ENCODE measurements at regions of chr22 and their contacts with region 1.

Region 1: DNA sequence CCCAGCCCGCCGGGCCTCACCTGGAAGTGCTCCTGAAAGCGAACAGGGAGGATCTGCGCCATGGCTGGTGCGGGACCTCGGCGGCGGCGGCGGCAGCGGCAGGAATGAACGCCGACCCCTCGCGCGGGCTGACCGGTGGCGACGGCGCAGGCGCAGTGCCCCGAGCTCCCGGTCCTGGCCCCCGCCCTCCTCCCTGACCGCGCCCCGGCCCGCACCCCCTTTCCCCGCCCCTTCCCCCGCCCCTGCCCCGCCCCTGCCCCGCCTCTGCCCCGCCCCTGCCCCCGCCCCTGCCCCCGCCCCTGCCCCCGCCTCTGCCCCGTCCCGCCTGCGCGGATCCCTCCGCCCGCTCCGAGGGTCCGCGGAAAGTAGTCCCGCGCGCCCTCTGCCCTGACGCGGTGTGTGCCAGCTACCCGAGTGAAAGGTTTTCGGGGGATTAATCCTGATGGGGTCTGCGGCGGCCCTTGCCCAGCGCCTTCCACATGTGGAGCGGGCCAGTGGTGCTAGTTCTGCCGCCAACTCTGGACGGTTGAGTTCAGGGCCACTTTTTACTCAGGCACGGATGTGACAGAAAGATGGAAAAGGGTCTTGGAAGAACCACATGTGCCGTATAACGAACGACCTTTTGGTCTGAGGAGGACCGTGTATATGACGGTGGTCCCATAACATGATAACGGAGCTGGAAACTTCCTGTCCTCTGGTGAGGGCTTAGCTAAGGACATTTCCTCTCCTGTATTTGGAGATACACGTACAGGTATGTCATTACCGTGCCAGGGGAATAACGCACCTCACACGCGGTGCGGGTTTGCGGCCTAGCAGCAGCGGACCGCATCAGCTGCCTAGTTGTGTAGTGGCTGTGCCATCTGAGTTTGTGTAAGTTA is at the start of gene CLTCL1:
- DNase-seq: peak; percentile 94 to 100 (median 100)
- ATAC-seq: peak; percentile 84
- H3K4me3 ChIP-seq: peak within 1 kb of the TSS; percentile 61
- H3K27ac ChIP-seq: peak within 1 kb of the TSS; percentile 67
- H3K4me1 ChIP-seq: peaks cover 25% of the 10 kb centered on the region in 2 experiments; a peak in 4 of 5 replicates
- H3K27me3 ChIP-seq: peaks cover 34 to 35% of the 10 kb centered on the region in 2 experiments; a peak in 4 of 5 replicates
- CTCF ChIP-seq: peak in 1 of 3 experiments; percentile 10; a peak in 2 of 6 replicates
- EP300 ChIP-seq: peak; percentile 14; the same call in 1 of the 2 replicates
- POLR2A ChIP-seq: peak; percentile 89
- RAD21 ChIP-seq: peak in 1 of 2 experiments; percentile 44; a peak in 2 of 4 replicates
- polyA plus RNA-seq, gene CLTCL1: 1.1 to 2.1 TPM

Region 2: GRCh38 chr22:19035474-19036228 is 256.2 kb before region 1 on chr22:
- CTCF ChIA-PET with region 1: no interaction called
- POLR2A ChIA-PET with region 1: no interaction called
- in situ Hi-C with region 1: no loop called
- intact Hi-C with region 1: loop called (anchors 10 kb)
- DNase-seq: peak; percentile 64 to 76 (median 69)
- ATAC-seq: peak; percentile 62
- H3K4me3 ChIP-seq: no peak overlapping the region
- H3K27ac ChIP-seq: no peak overlapping the region
- H3K4me1 ChIP-seq: peaks cover 0 to 27% of the 10 kb centered on the region in 2 experiments; a peak in 1 of 5 replicates
- H3K27me3 ChIP-seq: peaks cover 13 to 26% of the 10 kb centered on the region in 2 experiments; a peak in 4 of 5 replicates
- CTCF ChIP-seq: peak; percentile 39 to 63 (median 55); a peak in 5 of 6 replicates
- EP300 ChIP-seq: no peak
- POLR2A ChIP-seq: peak; percentile 72
- RAD21 ChIP-seq: peak in 1 of 2 experiments; percentile 57; a peak in 2 of 4 replicates

Region 3: GRCh38 chr22:19109198-19110067 is 182.4 kb before region 1 on chr22:
- CTCF ChIA-PET with region 1: no interaction called
- POLR2A ChIA-PET with region 1: no interaction called
- in situ Hi-C with region 1: no loop called
- intact Hi-C with region 1: loop called (anchors 10 kb)
- DNase-seq: peak in 3 of 4 experiments; percentile 57 to 95 (median 95)
- ATAC-seq: peak; percentile 89
- H3K4me3 ChIP-seq: peak overlapping the region; percentile 14
- H3K27ac ChIP-seq: peak overlapping the region; percentile 47
- H3K4me1 ChIP-seq: peaks cover 38 to 44% of the 10 kb centered on the region in 2 experiments
- H3K27me3 ChIP-seq: no peaks in the 10 kb centered on the region
- CTCF ChIP-seq: no peak
- EP300 ChIP-seq: peak; percentile 96
- POLR2A ChIP-seq: no peak
- RAD21 ChIP-seq: peak; percentile 16 to 23; a peak in 2 of 4 replicates

Region 4: GRCh38 chr22:19214078-19214473 is 77.7 kb before region 1 on chr22:
- CTCF ChIA-PET with region 1: no interaction called
- POLR2A ChIA-PET with region 1: no interaction called
- in situ Hi-C with region 1: no loop called
- intact Hi-C with region 1: loop called (anchors 1 kb)
- DNase-seq: peak in 1 of 4 experiments; percentile 38
- ATAC-seq: no peak
- H3K4me3 ChIP-seq: no peak overlapping the region
- H3K27ac ChIP-seq: no peak overlapping the region
- H3K4me1 ChIP-seq: peaks cover 9 to 13% of the 10 kb centered on the region in 2 experiments
- H3K27me3 ChIP-seq: peaks cover 30 to 37% of the 10 kb centered on the region in 2 experiments
- CTCF ChIP-seq: no peak
- EP300 ChIP-seq: no peak
- POLR2A ChIP-seq: no peak
- RAD21 ChIP-seq: 0 out of 4 replicates have a peak, but pooled peaks of 1 of the 2 experiments have one; percentile 9

Region 5: DNA sequence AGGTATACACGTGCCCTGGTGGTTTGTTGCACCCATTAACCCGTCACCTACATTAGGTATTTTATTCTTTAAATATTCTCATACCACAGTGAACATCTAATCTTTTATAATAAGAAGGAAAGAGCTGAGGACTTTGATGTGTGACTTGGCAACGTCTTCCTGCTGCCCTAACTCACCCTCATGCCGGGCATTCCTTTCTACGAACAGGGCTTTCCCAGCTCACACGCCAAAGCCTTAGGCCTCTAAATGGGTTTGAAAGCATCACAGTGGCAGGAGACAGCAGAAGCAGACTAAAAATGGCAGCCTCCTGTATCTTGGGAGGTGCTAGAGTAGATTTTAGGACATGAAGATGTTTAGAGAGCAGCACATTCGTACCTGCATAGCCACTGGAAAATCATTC is 52.9 kb before region 1 on chr22:
- CTCF ChIA-PET with region 1: no interaction called
- POLR2A ChIA-PET with region 1: no interaction called
- in situ Hi-C with region 1: no loop called
- intact Hi-C with region 1: no loop called
- DNase-seq: no peak
- ATAC-seq: no peak
- H3K4me3 ChIP-seq: no peak overlapping the region
- H3K27ac ChIP-seq: no peak overlapping the region
- H3K4me1 ChIP-seq: peaks cover 2 to 4% of the 10 kb centered on the region in 2 experiments; a peak in 4 of 5 replicates
- H3K27me3 ChIP-seq: peaks cover 51 to 70% of the 10 kb centered on the region in 2 experiments
- CTCF ChIP-seq: no peak
- EP300 ChIP-seq: no peak
- POLR2A ChIP-seq: no peak
- RAD21 ChIP-seq: no peak

Region 6: GRCh38 chr22:19275919-19276600 is 15.8 kb before region 1 on chr22:
- CTCF ChIA-PET with region 1: no interaction called
- POLR2A ChIA-PET with region 1: interaction called, 18 read pairs
- in situ Hi-C with region 1: no loop called
- intact Hi-C with region 1: no loop called
- DNase-seq: peak; percentile 70 to 79 (median 75)
- ATAC-seq: peak; percentile 77
- H3K4me3 ChIP-seq: no peak overlapping the region
- H3K27ac ChIP-seq: no peak overlapping the region
- H3K4me1 ChIP-seq: peaks cover 7 to 12% of the 10 kb centered on the region in 2 experiments
- H3K27me3 ChIP-seq: peaks cover 8 to 17% of the 10 kb centered on the region in 2 experiments; a peak in 3 of 5 replicates
- CTCF ChIP-seq: no peak
- EP300 ChIP-seq: peak; percentile 20; the same call in 1 of the 2 replicates
- POLR2A ChIP-seq: no peak
- RAD21 ChIP-seq: no peak

Region 7: DNA sequence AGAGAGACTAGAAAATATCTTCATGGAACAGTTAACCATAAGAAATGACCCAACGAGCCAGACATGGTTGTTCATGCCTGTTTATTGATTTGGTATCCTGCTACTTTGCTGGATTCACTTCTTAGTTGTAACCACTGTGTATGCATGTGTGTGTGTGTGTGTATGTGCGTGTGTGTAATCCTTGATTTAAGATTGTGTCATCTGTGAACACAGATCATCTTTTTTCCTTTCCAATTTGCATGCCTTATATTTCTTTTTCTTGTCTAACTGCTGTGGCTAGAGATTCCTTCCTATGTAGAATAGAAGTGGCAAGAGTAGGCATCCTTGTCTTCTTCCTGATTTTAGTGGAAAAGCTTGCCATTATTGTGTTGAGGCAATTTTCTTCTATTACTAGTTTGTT is 16.1 kb after region 1 on chr22:
- CTCF ChIA-PET with region 1: no interaction called
- POLR2A ChIA-PET with region 1: interaction called, 32 read pairs
- in situ Hi-C with region 1: no loop called
- intact Hi-C with region 1: no loop called
- DNase-seq: no peak
- ATAC-seq: no peak
- H3K4me3 ChIP-seq: no peak overlapping the region
- H3K27ac ChIP-seq: no peak overlapping the region
- H3K4me1 ChIP-seq: no peaks in the 10 kb centered on the region
- H3K27me3 ChIP-seq: peaks cover 12 to 13% of the 10 kb centered on the region in 2 experiments; a peak in 4 of 5 replicates
- CTCF ChIP-seq: no peak
- EP300 ChIP-seq: no peak
- POLR2A ChIP-seq: no peak
- RAD21 ChIP-seq: no peak

Region 8: GRCh38 chr22:19466126-19466716 is 174.4 kb after region 1 on chr22:
- CTCF ChIA-PET with region 1: no interaction called
- POLR2A ChIA-PET with region 1: no interaction called
- in situ Hi-C with region 1: no loop called
- intact Hi-C with region 1: no loop called
- DNase-seq: no peak
- ATAC-seq: no peak
- H3K4me3 ChIP-seq: no peak overlapping the region
- H3K27ac ChIP-seq: no peak overlapping the region
- H3K4me1 ChIP-seq: no peaks in the 10 kb centered on the region
- H3K27me3 ChIP-seq: no peaks in the 10 kb centered on the region
- CTCF ChIP-seq: no peak
- EP300 ChIP-seq: no peak
- POLR2A ChIP-seq: peak; percentile 51
- RAD21 ChIP-seq: no peak

Region 9: DNA sequence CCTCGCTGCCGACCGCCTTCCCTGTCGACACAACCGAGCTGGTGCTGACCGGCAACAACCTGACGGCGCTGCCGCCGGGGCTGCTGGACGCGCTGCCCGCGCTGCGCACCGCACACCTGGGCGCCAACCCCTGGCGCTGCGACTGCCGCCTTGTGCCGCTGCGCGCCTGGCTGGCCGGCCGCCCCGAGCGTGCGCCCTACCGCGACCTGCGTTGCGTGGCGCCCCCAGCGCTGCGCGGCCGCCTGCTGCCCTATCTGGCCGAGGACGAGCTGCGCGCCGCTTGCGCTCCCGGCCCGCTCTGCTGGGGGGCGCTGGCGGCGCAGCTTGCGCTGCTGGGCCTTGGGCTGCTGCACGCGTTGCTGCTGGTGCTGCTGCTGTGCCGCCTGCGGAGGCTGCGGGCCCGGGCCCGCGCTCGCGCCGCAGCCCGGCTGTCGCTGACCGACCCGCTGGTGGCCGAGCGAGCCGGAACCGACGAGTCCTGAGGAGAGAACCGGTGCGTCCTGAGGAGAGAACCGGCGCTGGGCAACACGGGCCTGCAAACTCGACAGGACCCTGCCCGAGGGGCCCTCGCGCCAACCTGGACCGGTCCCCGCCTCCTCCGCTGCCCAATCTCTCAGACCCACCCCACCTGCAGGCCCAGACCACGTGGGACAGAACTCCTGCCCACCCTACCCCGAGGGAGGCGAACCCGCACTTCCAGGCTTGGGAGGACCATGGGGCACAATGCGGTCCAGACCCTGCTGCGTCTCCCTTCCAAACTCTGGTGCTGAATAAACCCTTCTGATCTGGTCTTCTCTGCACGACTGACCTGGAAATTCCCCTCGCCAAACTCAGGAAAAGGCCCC is 432.4 kb after region 1 on chr22:
- CTCF ChIA-PET with region 1: no interaction called
- POLR2A ChIA-PET with region 1: no interaction called
- in situ Hi-C with region 1: no loop called
- intact Hi-C with region 1: loop called (anchors 5 kb)
- DNase-seq: peak; percentile 94 to 97 (median 94)
- ATAC-seq: peak; percentile 70
- H3K4me3 ChIP-seq: peak overlapping the region; percentile 55
- H3K27ac ChIP-seq: peak overlapping the region; percentile 88
- H3K4me1 ChIP-seq: peaks cover 45 to 90% of the 10 kb centered on the region in 2 experiments
- H3K27me3 ChIP-seq: no peaks in the 10 kb centered on the region; a peak in 1 of 5 replicates
- CTCF ChIP-seq: peak; percentile 72 to 98 (median 97); a peak in 5 of 6 replicates
- EP300 ChIP-seq: peak; percentile 72
- POLR2A ChIP-seq: no peak
- RAD21 ChIP-seq: peak in 1 of 2 experiments; percentile 93; a peak in 2 of 4 replicates

Measured in K562 (cell line).